B cell (primary cell): ENCODE measurements at regions of chr4 and their contacts with region 1.

Region 1: GRCh38 chr4:103099691-103100392 is at the start of gene BDH2:
- DNase-seq: peak; percentile 86
- ATAC-seq: peak; percentile 99
- H3K4me3 ChIP-seq: peak within 1 kb of the TSS; percentile 30 to 72 (median 59)
- H3K4me3 Mint-ChIP-seq: peak within 1 kb of the TSS; percentile 89
- H3K27ac ChIP-seq: peak within 1 kb of the TSS in 1 of 2 donors; percentile 23
- H3K27ac Mint-ChIP-seq: peak within 1 kb of the TSS; percentile 84
- H3K4me1 ChIP-seq: peaks cover 8 to 11% of the 10 kb centered on the region in 2 donors
- H3K4me1 Mint-ChIP-seq: peaks cover 13% of the 10 kb centered on the region
- H3K27me3 ChIP-seq: no peaks in the 10 kb centered on the region
- H3K27me3 Mint-ChIP-seq: no peaks in the 10 kb centered on the region
- CTCF ChIP-seq: peak; percentile 85
- total RNA-seq, gene BDH2: 8.8 and 12.6 TPM in 2 replicates

Region 2: DNA sequence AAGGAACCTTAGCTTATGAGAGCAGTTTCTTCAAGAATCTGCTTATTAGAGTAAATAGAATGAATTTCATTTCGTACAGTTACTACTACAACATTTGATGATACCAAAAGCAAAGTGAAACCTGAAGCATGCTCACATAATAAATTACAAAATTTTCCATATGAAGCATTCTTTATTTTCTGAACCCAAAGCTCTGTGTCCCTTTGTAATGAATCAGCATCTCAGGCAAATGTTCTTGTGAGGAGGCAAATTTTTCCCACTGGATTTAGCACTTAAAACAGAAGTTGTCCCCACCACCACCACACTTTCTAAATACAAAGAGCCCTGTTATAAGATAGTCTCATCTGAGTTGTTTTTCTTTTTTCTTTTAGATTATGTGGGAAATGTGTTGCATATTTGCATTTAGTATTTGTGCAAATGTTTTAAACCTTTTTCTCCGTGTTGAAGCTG is 669.4 kb before region 1 on chr4:
- CTCF ChIA-PET with region 1: interaction called, 6 read pairs
- POLR2A ChIA-PET with region 1: no interaction called
- intact Hi-C with region 1: loop called (anchors 2 kb)
- DNase-seq: no peak
- ATAC-seq: no peak
- H3K4me3 ChIP-seq: peak overlapping the region; percentile 48 to 79 (median 61)
- H3K4me3 Mint-ChIP-seq: peak overlapping the region; percentile 91
- H3K27ac ChIP-seq: peak overlapping the region in 1 of 2 donors; percentile 38
- H3K27ac Mint-ChIP-seq: peak overlapping the region; percentile 59
- H3K4me1 ChIP-seq: peaks cover 0 to 5% of the 10 kb centered on the region in 2 donors
- H3K4me1 Mint-ChIP-seq: peaks cover 5% of the 10 kb centered on the region
- H3K27me3 ChIP-seq: no peaks in the 10 kb centered on the region
- H3K27me3 Mint-ChIP-seq: no peaks in the 10 kb centered on the region
- CTCF ChIP-seq: no peak

Region 3: DNA sequence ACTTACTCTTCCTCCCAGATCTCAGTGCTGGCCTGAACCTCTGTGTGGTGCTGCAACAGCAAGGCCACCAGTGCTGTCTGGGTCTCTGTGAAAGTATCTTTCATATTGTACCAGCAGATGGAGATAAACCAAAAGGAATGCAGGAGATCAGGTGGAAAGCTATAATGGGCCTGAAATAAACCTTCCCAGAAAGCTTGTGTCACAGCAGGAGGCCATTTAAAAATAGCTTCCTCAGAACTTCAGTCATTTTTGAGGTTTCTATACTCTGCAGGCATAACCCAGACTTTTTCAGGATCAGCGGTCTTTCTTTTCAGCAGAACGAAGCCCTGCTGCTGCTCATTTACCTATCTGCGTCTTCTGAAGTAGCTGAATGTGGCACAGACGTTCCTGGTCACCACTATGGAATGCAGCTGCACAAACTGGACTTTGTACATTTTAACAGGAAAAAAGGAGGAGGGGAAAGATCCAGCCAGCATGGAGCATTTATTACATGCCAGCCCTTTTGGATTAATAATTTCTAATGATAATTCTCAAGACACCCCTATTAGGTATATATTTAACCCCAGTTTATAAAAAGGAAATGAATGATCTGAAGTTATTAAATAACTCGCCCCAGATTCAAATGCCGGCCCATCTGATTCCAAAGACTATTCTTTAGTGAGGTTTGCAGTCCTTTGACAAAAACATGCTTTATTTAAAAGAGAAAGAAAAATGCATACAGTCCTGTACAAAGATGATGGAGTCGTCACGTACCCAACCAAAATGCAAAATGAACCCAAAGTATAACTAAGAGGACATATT is 478.9 kb before region 1 on chr4:
- CTCF ChIA-PET with region 1: interaction called, 7 read pairs
- POLR2A ChIA-PET with region 1: no interaction called
- intact Hi-C with region 1: loop called (anchors 5 kb)
- DNase-seq: peak; percentile 37
- ATAC-seq: peak; percentile 57
- H3K4me3 ChIP-seq: no peak overlapping the region
- H3K4me3 Mint-ChIP-seq: no peak overlapping the region
- H3K27ac ChIP-seq: no peak overlapping the region
- H3K27ac Mint-ChIP-seq: no peak overlapping the region
- H3K4me1 ChIP-seq: peaks cover 3 to 6% of the 10 kb centered on the region in 2 donors
- H3K4me1 Mint-ChIP-seq: peaks cover 9% of the 10 kb centered on the region
- H3K27me3 ChIP-seq: no peaks in the 10 kb centered on the region
- H3K27me3 Mint-ChIP-seq: no peaks in the 10 kb centered on the region
- CTCF ChIP-seq: peak; percentile 30

Region 4: DNA sequence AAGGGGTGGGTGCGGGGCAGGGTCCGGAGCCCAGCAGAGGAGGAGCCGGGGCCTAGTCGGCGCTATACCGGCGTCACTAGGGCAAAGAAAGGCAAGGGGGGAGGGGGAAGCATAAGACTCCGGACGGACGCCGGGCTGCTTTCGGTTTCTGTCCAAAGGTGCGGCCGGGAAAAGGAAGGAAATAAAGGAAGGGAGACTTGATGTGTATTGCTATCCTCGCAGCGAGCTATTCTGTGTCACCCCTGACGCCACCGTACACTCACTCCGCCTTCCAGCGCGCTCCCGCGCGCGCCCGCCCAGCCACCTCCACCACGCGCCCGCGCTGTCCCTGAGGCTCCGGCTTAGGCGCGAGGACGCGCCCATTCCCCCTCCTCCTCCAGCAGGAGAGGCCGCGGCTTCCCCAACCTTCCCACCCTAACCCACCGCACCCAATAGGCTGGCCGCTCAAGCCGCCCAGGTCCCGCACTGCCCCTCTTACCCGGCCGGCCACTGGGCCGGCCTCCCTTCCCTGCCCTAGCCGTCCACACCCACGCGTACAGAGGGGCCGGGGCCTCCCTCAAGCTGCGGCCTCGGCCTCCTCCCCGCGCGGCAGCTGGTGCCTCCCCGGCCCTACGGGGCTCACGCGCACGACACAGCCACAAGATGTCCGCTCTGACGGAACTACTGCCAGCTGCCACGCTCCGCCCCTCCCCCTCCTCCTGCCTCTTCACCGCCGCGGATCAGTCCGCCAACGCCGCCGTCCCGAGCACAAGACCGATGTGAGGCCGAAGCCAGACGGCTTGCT is 272.8 kb before region 1 on chr4 and contains the start of gene UBE2D3:
- CTCF ChIA-PET with region 1: interaction called, 3 read pairs
- POLR2A ChIA-PET with region 1: interaction called, 4 read pairs
- intact Hi-C with region 1: loop called (anchors 1 kb)
- DNase-seq: peak; percentile 99
- ATAC-seq: peak; percentile 48
- H3K4me3 ChIP-seq: peak within 1 kb of the TSS; percentile 96 to 100 (median 98)
- H3K4me3 Mint-ChIP-seq: no peak within 1 kb of the TSS
- H3K27ac ChIP-seq: peak within 1 kb of the TSS; percentile 100
- H3K27ac Mint-ChIP-seq: no peak within 1 kb of the TSS
- H3K4me1 ChIP-seq: peaks cover 33 to 34% of the 10 kb centered on the region in 2 donors
- H3K4me1 Mint-ChIP-seq: peaks cover 38% of the 10 kb centered on the region
- H3K27me3 ChIP-seq: no peaks in the 10 kb centered on the region
- H3K27me3 Mint-ChIP-seq: no peaks in the 10 kb centered on the region
- CTCF ChIP-seq: no peak
- total RNA-seq, gene UBE2D3: 261 and 264 TPM in 2 replicates

Region 5: DNA sequence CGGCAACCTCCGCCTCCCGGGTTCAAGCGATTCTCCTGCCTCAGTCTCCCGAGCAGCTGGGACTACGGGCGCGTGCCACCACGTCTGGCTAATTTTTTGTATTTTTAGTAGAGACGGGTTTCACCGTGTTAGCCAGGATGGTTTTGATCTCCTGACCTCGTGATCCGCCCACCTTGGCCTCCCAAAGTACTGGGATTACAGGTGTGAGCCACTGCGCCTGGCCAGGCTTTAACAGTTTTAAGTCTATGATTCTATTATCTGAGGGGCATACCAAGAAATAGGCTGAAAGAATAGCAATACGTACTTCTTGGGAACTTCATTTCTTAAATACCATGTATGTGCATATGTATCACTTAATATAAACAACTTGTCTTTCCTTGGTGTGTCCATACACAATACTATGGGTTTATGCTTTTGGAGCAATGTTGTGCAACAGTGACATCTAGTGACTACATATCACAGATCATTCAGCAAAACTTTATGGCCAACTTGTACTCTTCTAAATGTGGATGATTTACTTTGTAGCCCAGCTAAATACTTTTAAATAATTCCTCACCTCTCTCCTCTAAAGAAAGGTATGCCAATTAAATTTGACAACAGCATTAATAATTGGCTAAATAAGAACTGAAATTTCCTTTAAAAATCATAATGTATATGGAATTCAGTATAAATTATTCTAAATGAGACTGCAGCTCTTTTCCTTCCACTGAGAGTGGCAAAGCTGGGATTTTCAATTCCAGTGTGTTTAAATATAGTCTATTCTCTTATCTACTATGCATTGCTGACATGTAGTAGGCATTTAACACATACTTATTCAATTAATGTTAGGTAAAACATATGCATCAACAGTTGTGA is 90.7 kb before region 1 on chr4:
- CTCF ChIA-PET with region 1: interaction called, 17 read pairs
- POLR2A ChIA-PET with region 1: no interaction called
- intact Hi-C with region 1: no loop called
- DNase-seq: peak; percentile 79
- ATAC-seq: peak; percentile 67
- H3K4me3 ChIP-seq: no peak overlapping the region
- H3K4me3 Mint-ChIP-seq: no peak overlapping the region
- H3K27ac ChIP-seq: no peak overlapping the region
- H3K27ac Mint-ChIP-seq: no peak overlapping the region
- H3K4me1 ChIP-seq: no peaks in the 10 kb centered on the region
- H3K4me1 Mint-ChIP-seq: no peaks in the 10 kb centered on the region
- H3K27me3 ChIP-seq: no peaks in the 10 kb centered on the region
- H3K27me3 Mint-ChIP-seq: no peaks in the 10 kb centered on the region
- CTCF ChIP-seq: peak; percentile 87

Region 6: DNA sequence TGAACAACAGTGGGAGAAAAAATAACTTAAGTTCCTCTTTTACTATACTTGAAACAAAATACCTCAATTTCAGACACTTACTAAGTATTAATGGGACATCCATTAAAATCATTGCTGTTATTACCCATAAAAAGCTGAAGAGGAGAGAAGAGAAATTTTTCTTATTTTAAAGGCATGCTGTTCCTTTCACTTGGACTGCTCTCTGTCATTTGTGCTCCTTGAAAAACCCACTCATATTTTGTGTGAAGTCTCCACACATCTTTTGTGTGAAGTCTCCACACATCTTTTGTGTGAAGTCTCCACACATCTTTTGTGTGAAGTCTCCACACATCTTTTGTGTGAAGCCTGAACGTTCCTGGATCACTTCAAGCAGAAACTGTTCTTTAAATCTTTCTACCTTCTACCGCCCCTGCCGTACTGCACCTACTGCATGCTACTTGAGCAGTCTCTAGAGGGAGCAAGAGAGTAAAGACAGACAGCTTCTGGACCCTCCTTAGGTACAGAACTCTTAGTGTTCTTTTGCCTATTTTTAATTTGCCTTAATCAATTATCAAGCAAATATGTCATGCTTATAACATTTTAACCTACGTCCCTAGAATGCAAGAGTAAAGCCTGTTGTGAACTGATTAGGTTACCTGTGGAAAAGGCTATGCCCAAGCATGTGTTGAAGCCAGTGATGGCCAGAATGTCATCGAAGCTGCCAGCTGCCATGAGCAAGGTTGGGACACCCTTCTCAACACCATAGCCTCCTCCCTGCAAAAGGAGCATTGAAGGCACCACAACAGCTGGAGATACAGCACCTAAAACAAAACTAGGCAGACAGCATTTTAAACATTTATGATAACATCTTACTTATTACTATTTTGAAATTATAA is 53.2 kb before region 1 on chr4:
- CTCF ChIA-PET with region 1: interaction called, 117 read pairs
- POLR2A ChIA-PET with region 1: no interaction called
- intact Hi-C with region 1: loop called (anchors 1 kb)
- DNase-seq: peak; percentile 66
- ATAC-seq: peak; percentile 97
- H3K4me3 ChIP-seq: no peak overlapping the region
- H3K4me3 Mint-ChIP-seq: peak overlapping the region; percentile 54
- H3K27ac ChIP-seq: no peak overlapping the region
- H3K27ac Mint-ChIP-seq: peak overlapping the region; percentile 71
- H3K4me1 ChIP-seq: no peaks in the 10 kb centered on the region
- H3K4me1 Mint-ChIP-seq: peaks cover 9% of the 10 kb centered on the region
- H3K27me3 ChIP-seq: no peaks in the 10 kb centered on the region
- H3K27me3 Mint-ChIP-seq: no peaks in the 10 kb centered on the region
- CTCF ChIP-seq: peak; percentile 92

Region 7: GRCh38 chr4:103198111-103198765 is 98.4 kb after region 1 on chr4 and contains the start of gene CENPE:
- CTCF ChIA-PET with region 1: interaction called, 3 read pairs
- POLR2A ChIA-PET with region 1: no interaction called
- intact Hi-C with region 1: loop called (anchors 1 kb)
- DNase-seq: peak; percentile 94
- ATAC-seq: peak; percentile 88
- H3K4me3 ChIP-seq: peak within 1 kb of the TSS; percentile 59 to 95 (median 79)
- H3K4me3 Mint-ChIP-seq: peak within 1 kb of the TSS; percentile 94
- H3K27ac ChIP-seq: peak within 1 kb of the TSS; percentile 64 to 87
- H3K27ac Mint-ChIP-seq: peak within 1 kb of the TSS; percentile 96
- H3K4me1 ChIP-seq: peaks cover 9 to 10% of the 10 kb centered on the region in 2 donors
- H3K4me1 Mint-ChIP-seq: peaks cover 15% of the 10 kb centered on the region
- H3K27me3 ChIP-seq: peaks cover 0 to 7% (median 0%) of the 10 kb centered on the region in 4 experiments
- H3K27me3 Mint-ChIP-seq: peaks cover 12% of the 10 kb centered on the region
- CTCF ChIP-seq: no peak
- total RNA-seq, gene CENPE: 2.1 and 2.8 TPM in 2 replicates